ENCODE measurements at regions of chr19 and their contacts with region 1.

Region 1: DNA sequence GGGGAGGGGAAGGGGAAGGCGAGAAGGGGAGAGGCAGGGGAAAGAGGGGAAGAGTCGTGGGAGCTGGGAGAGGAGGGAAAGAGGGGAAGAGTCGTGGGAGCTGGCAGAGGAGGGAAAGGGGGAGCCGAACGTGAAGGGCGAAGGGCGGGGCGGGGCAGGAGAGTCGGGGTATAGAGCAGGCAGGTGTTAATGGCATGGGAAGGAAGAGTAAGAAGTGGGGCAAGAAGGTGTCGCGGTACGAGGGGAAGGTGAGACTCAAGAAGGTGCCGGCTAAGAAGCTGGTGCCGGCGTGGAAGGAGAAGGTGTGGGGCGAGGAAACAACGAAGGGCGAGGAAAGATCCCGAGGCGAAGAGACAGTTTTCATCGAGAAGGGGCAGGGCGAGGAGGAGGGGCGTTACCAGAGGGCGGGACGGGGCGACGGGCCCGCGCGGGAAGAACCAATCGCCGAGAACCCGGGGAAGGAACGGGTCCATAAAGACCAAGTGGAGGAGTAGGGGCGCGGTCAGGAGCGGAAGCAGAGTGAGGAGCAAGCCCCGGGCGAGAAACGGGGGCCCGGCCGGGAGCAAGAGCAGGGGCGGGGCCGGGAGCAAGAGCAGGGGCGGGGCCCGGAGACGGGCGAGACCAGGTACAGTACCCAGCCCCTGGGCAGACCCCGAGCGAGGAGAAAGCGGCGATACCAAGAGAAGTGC is 463 bp downstream of the CATSPERG start:
- DNase-seq: peak; percentile 98
- H3K4me3 ChIP-seq: peak overlapping the region; percentile 64
- H3K27ac ChIP-seq: peak overlapping the region; percentile 89
- H3K4me1 ChIP-seq: no peaks in the 10 kb centered on the region
- H3K27me3 ChIP-seq: no peaks in the 10 kb centered on the region
- CTCF ChIP-seq: no peak

Region 2: DNA sequence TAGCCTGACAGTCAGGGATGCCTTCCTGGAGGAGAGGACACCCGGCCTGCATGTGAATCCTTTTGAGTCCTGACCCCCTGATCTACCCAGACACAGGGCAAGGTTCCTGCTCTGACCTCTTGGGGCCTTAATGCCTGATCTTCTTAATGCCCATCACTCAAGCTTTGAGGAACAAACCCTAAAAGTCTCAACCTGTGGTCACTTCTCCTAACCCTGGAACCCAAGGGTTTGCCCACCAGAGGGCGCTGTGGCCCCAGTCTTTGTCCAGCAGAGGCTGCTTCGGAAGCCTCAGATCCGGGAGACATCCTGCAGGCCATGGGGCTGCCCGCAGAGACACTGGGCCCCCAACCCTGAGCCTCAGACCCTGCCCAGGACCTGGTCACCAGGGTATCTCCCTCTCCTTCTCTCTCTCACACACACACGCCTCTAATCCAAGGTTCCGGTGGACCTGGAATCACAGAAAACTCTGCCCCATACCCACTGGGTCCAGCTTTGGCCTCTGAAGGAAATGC is 102.3 kb before region 1 on chr19:
- intact Hi-C with region 1: loop called (anchors 2 kb)
- DNase-seq: peak; percentile 85
- H3K4me3 ChIP-seq: no peak overlapping the region
- H3K27ac ChIP-seq: no peak overlapping the region
- H3K4me1 ChIP-seq: peaks cover 5% of the 10 kb centered on the region
- H3K27me3 ChIP-seq: peaks cover 12% of the 10 kb centered on the region
- CTCF ChIP-seq: peak; percentile 77

Region 3: GRCh38 chr19:38245826-38246498 is 90.1 kb before region 1 on chr19:
- intact Hi-C with region 1: loop called (anchors 2 kb)
- DNase-seq: no peak
- H3K4me3 ChIP-seq: no peak overlapping the region
- H3K27ac ChIP-seq: no peak overlapping the region
- H3K4me1 ChIP-seq: peaks cover 7% of the 10 kb centered on the region
- H3K27me3 ChIP-seq: no peaks in the 10 kb centered on the region
- CTCF ChIP-seq: no peak

Region 4: GRCh38 chr19:38374429-38375176 is 38.5 kb after region 1 on chr19 and contains the start of gene PSMD8:
- intact Hi-C with region 1: loop called (anchors 5 kb)
- DNase-seq: peak; percentile 99
- H3K4me3 ChIP-seq: peak within 1 kb of the TSS; percentile 61
- H3K27ac ChIP-seq: peak within 1 kb of the TSS; percentile 68
- H3K4me1 ChIP-seq: peaks cover 5% of the 10 kb centered on the region
- H3K27me3 ChIP-seq: no peaks in the 10 kb centered on the region
- CTCF ChIP-seq: no peak
- total RNA-seq, gene PSMD8: 126 to 184 TPM